ENCODE measurements at regions of chr9 and their contacts with region 1.

Region 1: GRCh38 chr9:133459476-133460404 is at the start of gene CACFD1:
- DNase-seq: peak; percentile 99
- ATAC-seq: peak; percentile 88
- H3K4me3 Mint-ChIP-seq: peak within 1 kb of the TSS; percentile 82
- H3K27ac Mint-ChIP-seq: peak within 1 kb of the TSS; percentile 96
- H3K4me1 Mint-ChIP-seq: peaks cover 31% of the 10 kb centered on the region
- H3K27me3 Mint-ChIP-seq: no peaks in the 10 kb centered on the region
- CTCF ChIP-seq: no peak
- total RNA-seq, gene CACFD1: 22.5 to 38.7 TPM (median 29.5 TPM) in 3 replicates

Region 2: GRCh38 chr9:133342069-133342406 is 117.7 kb before region 1 on chr9:
- CTCF ChIA-PET with region 1: interaction called, 19 read pairs
- POLR2A ChIA-PET with region 1: no interaction called
- DNase-seq: peak; percentile 75
- ATAC-seq: peak; percentile 84
- H3K4me3 Mint-ChIP-seq: no peak overlapping the region
- H3K27ac Mint-ChIP-seq: peak overlapping the region; percentile 58
- H3K4me1 Mint-ChIP-seq: peaks cover 13% of the 10 kb centered on the region
- H3K27me3 Mint-ChIP-seq: no peaks in the 10 kb centered on the region
- CTCF ChIP-seq: no peak

Region 3: DNA sequence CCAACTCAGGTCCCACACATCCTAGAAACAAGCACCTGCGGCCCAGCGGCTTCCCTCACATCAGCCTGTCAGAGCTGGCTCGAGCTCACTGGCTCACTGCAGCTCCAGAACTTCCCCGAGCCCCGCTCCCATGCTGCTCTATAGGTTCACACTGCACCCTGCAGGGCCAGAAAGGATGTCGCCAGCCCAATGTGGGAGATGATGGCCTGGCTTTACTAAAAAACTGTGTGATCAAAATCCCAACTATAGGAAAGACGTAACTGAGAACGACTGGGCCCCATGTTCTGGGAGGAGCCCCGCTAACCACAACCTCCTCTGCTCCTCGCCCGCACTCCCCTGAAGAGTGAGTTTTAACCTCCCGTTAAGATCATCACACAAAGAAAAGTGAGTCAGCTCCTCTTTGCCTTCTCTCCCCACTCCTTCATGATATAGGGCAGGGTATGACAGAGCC is 88.5 kb before region 1 on chr9:
- CTCF ChIA-PET with region 1: no interaction called
- POLR2A ChIA-PET with region 1: no interaction called
- DNase-seq: no peak
- ATAC-seq: no peak
- H3K4me3 Mint-ChIP-seq: no peak overlapping the region
- H3K27ac Mint-ChIP-seq: peak overlapping the region; percentile 68
- H3K4me1 Mint-ChIP-seq: peaks cover 13% of the 10 kb centered on the region
- H3K27me3 Mint-ChIP-seq: no peaks in the 10 kb centered on the region
- CTCF ChIP-seq: no peak

Region 4: DNA sequence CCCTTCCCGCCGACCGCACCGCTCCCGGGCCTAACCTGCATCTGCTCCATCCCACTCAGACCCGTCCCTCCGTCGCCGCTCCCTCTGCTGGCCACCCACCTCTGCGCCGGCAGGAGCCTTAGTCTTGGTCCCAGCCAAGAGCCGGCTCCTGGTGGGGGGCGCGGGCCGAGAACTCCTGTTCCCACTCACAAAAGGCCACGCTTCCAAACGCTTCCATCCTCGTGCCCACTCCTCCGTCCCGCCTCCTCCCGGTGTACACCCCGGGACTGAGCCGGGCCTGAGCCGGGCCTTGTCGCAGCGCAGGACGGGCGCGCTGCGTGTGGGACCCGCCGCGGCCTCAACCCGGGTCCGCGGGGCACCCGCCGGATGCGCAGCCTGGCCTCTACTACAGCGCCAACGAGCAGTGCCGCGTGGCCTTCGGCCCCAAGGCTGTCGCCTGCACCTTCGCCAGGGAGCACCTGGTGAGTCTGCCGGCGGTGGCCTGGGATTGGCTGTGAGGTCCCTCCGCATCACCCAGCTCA is 30.0 kb before region 1 on chr9:
- CTCF ChIA-PET with region 1: interaction called, 16 read pairs
- POLR2A ChIA-PET with region 1: interaction called, 4 read pairs
- DNase-seq: peak; percentile 88
- ATAC-seq: peak; percentile 71
- H3K4me3 Mint-ChIP-seq: peak overlapping the region; percentile 66
- H3K27ac Mint-ChIP-seq: no peak overlapping the region
- H3K4me1 Mint-ChIP-seq: peaks cover 3% of the 10 kb centered on the region; the same call in 1 of the 2 replicates
- H3K27me3 Mint-ChIP-seq: peaks cover 20% of the 10 kb centered on the region
- CTCF ChIP-seq: no peak

Region 5: DNA sequence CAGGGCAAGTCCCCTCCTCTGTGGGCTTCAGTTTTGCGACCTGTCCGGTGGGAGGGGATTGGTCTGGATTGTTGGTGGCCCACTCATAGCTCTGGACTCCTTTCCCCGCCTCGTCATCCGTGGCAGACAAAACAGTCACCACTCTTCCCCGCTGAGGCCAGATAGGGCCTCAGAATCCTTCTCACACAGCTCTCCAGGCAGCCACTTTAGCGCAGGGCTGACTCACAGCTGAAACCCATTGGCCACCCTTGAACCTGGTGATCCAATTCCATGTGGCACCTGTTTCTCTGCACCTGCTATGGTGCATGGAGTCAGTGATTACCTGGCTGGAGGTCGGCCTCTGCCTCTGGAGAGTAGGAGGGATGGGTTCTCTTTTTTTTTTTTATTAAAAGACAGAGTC is 15.8 kb before region 1 on chr9:
- CTCF ChIA-PET with region 1: interaction called, 15 read pairs
- POLR2A ChIA-PET with region 1: no interaction called
- DNase-seq: no peak
- ATAC-seq: no peak
- H3K4me3 Mint-ChIP-seq: no peak overlapping the region
- H3K27ac Mint-ChIP-seq: no peak overlapping the region
- H3K4me1 Mint-ChIP-seq: no peaks in the 10 kb centered on the region
- H3K27me3 Mint-ChIP-seq: no peaks in the 10 kb centered on the region
- CTCF ChIP-seq: no peak

Region 6: DNA sequence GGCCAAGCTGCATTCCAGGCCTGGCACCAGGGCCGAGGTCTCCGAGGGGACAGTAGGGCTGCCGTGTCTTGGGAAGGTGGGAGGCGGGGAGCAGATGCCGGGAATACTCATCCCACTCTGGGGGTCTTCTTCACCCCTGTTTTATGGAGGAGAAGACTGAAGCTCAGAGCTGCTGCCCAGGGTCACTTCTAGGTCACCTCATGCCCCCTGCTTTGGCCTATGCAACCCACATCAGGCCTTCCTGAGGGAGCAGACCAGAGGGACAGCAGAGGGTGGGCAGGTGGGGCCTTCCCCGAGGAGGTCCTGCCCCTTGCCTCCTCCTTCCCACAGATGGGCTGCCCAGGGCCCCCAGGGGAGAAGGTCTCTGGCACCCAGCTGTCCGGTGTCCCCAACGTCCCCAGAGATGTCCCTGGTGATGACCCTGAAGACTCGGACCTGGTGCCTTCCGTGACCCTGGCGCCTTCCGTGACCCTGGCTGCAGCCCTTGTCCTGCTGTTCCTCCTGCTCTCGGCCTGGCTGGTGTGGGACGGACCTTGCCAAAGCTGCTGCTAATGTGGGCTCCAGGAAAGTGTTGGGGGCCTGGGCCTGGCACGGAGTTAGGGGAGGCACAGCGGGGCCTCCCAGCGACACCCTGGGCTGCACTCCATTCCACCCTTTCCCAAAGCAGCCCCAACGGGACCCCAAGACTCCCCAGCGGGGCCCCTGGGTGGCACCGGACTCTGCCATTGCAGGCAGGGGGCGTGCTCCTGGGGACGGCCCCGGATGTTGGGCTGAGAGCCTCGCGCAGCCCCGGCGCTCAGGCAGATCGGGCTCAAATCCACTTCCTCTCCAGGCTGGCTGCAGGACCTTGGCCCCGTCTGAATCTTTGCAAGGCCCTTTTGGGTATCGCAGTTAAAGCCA is 25.9 kb after region 1 on chr9:
- CTCF ChIA-PET with region 1: interaction called, 29 read pairs
- POLR2A ChIA-PET with region 1: no interaction called
- DNase-seq: no peak
- ATAC-seq: peak; percentile 30
- H3K4me3 Mint-ChIP-seq: no peak overlapping the region
- H3K27ac Mint-ChIP-seq: no peak overlapping the region
- H3K4me1 Mint-ChIP-seq: no peaks in the 10 kb centered on the region
- H3K27me3 Mint-ChIP-seq: peaks cover 4% of the 10 kb centered on the region
- CTCF ChIP-seq: no peak

Measured in WTC11 (cell line).